Aorta (tissue), 5 donors: ENCODE measurements at regions of chr2 and their contacts with region 1.

Region 1: GRCh38 chr2:46296840-46297545 is at the start of gene EPAS1:
- DNase-seq: peak; percentile 98 to 99
- ATAC-seq: peak; percentile 88
- H3K4me3 ChIP-seq: peak within 1 kb of the TSS; percentile 86 to 87
- H3K27ac ChIP-seq: peak within 1 kb of the TSS; percentile 43 to 66
- H3K4me1 ChIP-seq: no peaks in the 10 kb centered on the region
- H3K27me3 ChIP-seq: no peaks in the 10 kb centered on the region
- total RNA-seq, gene EPAS1: 414 to 954 TPM

Region 2: GRCh38 chr2:45993476-45993991 is 303.5 kb before region 1 on chr2:
- intact Hi-C with region 1: loop called in 1 of 2 experiments (anchors 5 kb)
- DNase-seq: peak in 1 of 2 donors; percentile 69
- ATAC-seq: peak; percentile 86
- H3K4me3 ChIP-seq: no peak overlapping the region
- H3K27ac ChIP-seq: peak overlapping the region in 1 of 2 donors; percentile 68
- H3K4me1 ChIP-seq: no peaks in the 10 kb centered on the region
- H3K27me3 ChIP-seq: no peaks in the 10 kb centered on the region

Region 3: DNA sequence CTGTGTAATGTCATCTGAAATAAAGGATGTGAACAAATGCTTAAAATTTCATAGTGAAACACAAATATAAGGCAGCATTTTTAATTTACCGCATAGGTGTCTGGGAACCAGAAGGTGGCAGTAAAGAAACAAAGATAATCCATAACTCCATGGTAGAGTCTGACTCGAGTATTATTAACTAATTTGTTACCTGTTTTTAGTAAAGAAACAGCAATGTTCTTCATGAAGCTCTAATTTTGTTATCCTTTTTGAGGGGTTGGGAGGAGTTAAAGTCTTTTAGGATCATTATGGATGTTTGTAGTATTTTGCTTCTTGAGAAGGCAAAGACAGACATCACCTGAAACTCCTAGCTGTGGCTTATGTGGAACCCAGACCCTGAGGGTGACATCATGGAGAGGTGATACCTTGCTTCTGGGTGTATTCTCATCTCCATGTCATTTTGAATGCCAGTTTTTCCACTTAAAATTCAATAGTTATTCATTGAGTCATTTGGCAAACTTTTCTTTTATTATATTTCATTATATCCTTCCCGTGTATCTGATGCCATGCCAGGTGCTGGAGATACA is 286.0 kb before region 1 on chr2:
- intact Hi-C with region 1: loop called in 1 of 2 experiments (anchors 2 kb)
- DNase-seq: no peak
- ATAC-seq: no peak
- H3K4me3 ChIP-seq: no peak overlapping the region
- H3K27ac ChIP-seq: no peak overlapping the region
- H3K4me1 ChIP-seq: peaks cover 0 to 8% of the 10 kb centered on the region in 2 donors
- H3K27me3 ChIP-seq: no peaks in the 10 kb centered on the region

Region 4: GRCh38 chr2:46062637-46063412 is 234.2 kb before region 1 on chr2:
- intact Hi-C with region 1: loop called (anchors 2 to 5 kb)
- DNase-seq: peak; percentile 84
- ATAC-seq: peak; percentile 89
- H3K4me3 ChIP-seq: no peak overlapping the region
- H3K27ac ChIP-seq: no peak overlapping the region
- H3K4me1 ChIP-seq: no peaks in the 10 kb centered on the region
- H3K27me3 ChIP-seq: peaks cover 0 to 2% of the 10 kb centered on the region in 2 donors

Region 5: GRCh38 chr2:46146891-46147502 is 150.0 kb before region 1 on chr2:
- intact Hi-C with region 1: no loop called
- DNase-seq: no peak
- ATAC-seq: no peak
- H3K4me3 ChIP-seq: no peak overlapping the region
- H3K27ac ChIP-seq: no peak overlapping the region
- H3K4me1 ChIP-seq: no peaks in the 10 kb centered on the region
- H3K27me3 ChIP-seq: no peaks in the 10 kb centered on the region

Region 6: GRCh38 chr2:46230115-46230571 is 66.8 kb before region 1 on chr2:
- intact Hi-C with region 1: loop called in 1 of 2 experiments (anchors 5 kb)
- DNase-seq: peak in 1 of 2 donors; percentile 81
- ATAC-seq: peak; percentile 83
- H3K4me3 ChIP-seq: no peak overlapping the region
- H3K27ac ChIP-seq: no peak overlapping the region
- H3K4me1 ChIP-seq: peaks cover 0 to 2% of the 10 kb centered on the region in 2 donors
- H3K27me3 ChIP-seq: no peaks in the 10 kb centered on the region

Region 7: DNA sequence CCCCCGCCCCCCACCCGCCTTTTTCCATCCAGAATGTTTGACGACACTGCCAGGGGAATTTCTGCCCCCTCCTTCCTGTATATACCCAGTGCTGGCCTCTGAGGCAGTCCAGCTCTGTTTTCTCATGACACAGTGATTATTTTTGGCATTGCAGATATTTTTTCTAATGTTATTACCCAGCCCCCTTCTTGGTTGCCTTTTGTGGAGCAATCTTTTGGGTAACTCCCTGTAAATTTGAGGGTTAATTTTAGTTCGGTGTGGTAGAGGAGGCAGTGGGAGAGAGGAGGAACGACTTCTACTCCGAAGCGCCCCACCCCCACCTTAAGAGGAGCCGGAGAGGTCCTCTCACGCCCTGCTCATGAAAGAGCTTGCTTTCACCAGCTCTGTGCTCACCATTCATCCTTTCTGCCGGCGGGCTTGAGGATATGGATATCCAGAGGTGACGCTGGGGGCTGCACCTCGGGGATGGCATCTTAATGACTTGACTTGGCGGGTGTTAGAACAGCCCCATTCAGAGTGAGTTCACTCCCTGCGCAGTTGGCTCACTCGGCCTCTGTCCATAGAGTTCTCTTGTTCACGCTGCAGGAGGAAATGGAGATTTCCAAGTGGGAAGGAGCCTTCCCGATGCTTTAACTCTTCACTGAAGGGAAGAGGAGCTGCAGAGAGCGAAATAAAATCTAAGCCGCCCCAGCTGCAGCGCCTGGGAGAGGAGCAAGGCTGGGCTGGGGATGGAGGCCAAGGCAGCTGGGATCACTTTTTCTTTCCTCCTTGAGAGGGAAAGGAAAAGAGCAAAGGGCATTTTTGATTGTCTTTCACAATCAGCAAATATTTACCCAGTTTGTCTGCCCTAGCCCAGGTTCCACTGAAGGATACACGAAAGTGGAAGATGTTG is 38.6 kb after region 1 on chr2:
- intact Hi-C with region 1: loop called (anchors 1 to 5 kb)
- DNase-seq: peak; percentile 67 to 84
- ATAC-seq: peak; percentile 33
- H3K4me3 ChIP-seq: no peak overlapping the region
- H3K27ac ChIP-seq: peak overlapping the region; percentile 92 to 95
- H3K4me1 ChIP-seq: peaks cover 10 to 19% of the 10 kb centered on the region in 2 donors
- H3K27me3 ChIP-seq: no peaks in the 10 kb centered on the region